ENCODE measurements at regions of chr19 and their contacts with region 1.

Region 1: GRCh38 chr19:17448131-17448967 is at the start of gene TMEM221:
- DNase-seq: peak; percentile 71
- ATAC-seq: peak; percentile 73
- H3K4me3 Mint-ChIP-seq: peak within 1 kb of the TSS; percentile 51
- H3K27ac Mint-ChIP-seq: no peak within 1 kb of the TSS
- H3K4me1 Mint-ChIP-seq: peaks cover 13% of the 10 kb centered on the region
- H3K27me3 Mint-ChIP-seq: peaks cover 23% of the 10 kb centered on the region
- total RNA-seq, gene TMEM221: not detected

Region 2: GRCh38 chr19:17370026-17370587 is 78.2 kb before region 1 on chr19:
- POLR2A ChIA-PET with region 1: interaction called, 10 read pairs
- DNase-seq: no peak
- ATAC-seq: no peak
- H3K4me3 Mint-ChIP-seq: no peak overlapping the region
- H3K27ac Mint-ChIP-seq: no peak overlapping the region
- H3K4me1 Mint-ChIP-seq: peaks cover 4% of the 10 kb centered on the region
- H3K27me3 Mint-ChIP-seq: peaks cover 8% of the 10 kb centered on the region